Head of caudate nucleus (tissue), 42 donors: ENCODE measurements at regions of chr2 and their contacts with region 1.

Region 1: GRCh38 chr2:17672583-17673317 is 80.9 kb downstream of the SMC6 start:
- DNase-seq: no peak

Region 2: GRCh38 chr2:17644997-17645720 is 27.6 kb before region 1 on chr2:
- intact Hi-C with region 1: loop called (anchors 2 kb)
- DNase-seq: peak in 2 of 42 donors; percentile 33

Region 3: GRCh38 chr2:17892770-17893534 is 220.2 kb after region 1 on chr2:
- intact Hi-C with region 1: no loop called
- DNase-seq: no peak